ENCODE measurements at regions of chr2 and their contacts with region 1.

Region 1: GRCh38 chr2:33033606-33034081 is 86.9 kb downstream of the LTBP1 start:
- DNase-seq: no peak

Region 2: DNA sequence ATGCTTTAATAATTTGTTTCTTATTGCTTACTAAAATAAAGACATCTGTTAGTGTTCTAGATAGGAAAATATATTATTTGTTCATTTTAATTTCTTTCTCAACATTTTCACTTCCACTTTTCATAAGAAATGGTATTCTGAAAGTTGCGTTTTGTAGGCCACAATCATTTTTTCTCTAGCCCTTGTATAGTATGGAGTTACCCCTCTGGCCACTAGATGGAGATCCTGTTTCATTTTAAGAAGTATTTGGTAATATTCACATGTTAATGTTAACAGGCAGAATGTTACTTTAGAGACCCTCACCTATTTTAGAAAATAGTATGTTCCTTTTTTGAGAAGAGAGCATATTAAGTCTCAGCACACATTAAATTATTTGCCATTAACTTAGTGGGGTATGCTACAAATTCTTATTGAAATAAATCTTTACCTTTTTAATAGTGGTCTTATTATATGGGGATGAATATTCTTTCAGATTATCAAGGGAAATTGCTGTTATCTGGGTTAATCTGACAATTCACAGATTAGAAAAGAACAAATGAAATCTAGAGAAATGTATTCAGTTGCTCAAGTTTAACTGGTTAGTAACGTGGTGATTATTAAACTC is 479.7 kb before region 1 on chr2:
- intact Hi-C with region 1: loop called (anchors 10 kb)
- DNase-seq: no peak

Region 3: GRCh38 chr2:33145459-33145858 is 111.8 kb after region 1 on chr2:
- intact Hi-C with region 1: no loop called
- DNase-seq: no peak

Region 4: GRCh38 chr2:33275689-33276444 is 242.2 kb after region 1 on chr2:
- intact Hi-C with region 1: loop called (anchors 5 kb)
- DNase-seq: no peak

Region 5: DNA sequence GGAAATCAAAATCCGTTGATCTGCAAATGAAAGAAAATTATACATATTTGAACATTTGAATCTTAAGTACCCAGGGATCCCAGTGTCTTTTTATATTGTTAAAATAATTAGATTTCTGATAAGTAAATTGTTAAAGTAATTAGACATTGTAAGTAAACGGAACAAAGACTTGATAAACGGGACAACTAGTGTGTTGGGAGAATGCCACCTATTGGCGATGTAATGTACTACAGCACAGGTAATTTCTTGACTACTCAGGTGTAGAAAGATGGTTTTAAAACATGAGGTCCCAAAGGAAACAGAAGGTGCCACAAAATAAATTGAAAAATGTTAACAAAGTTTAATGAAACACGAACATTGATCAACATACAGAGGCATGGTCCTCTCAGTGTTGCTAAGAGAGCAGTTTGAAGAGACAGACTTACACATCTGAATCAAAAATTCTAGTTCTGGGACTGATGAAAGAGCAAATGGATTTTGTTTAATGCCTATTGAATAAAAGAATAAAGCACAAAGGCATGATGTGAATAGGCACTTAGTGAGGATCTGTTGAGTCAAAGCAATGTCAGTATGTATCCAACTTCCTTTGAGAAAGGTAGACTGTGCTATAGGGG is 339.4 kb after region 1 on chr2:
- intact Hi-C with region 1: loop called (anchors 10 kb)
- DNase-seq: no peak

Measured in cardiac septum (tissue), 1 donor.